ENCODE measurements at regions of chrX and their contacts with region 1.

Region 1: DNA sequence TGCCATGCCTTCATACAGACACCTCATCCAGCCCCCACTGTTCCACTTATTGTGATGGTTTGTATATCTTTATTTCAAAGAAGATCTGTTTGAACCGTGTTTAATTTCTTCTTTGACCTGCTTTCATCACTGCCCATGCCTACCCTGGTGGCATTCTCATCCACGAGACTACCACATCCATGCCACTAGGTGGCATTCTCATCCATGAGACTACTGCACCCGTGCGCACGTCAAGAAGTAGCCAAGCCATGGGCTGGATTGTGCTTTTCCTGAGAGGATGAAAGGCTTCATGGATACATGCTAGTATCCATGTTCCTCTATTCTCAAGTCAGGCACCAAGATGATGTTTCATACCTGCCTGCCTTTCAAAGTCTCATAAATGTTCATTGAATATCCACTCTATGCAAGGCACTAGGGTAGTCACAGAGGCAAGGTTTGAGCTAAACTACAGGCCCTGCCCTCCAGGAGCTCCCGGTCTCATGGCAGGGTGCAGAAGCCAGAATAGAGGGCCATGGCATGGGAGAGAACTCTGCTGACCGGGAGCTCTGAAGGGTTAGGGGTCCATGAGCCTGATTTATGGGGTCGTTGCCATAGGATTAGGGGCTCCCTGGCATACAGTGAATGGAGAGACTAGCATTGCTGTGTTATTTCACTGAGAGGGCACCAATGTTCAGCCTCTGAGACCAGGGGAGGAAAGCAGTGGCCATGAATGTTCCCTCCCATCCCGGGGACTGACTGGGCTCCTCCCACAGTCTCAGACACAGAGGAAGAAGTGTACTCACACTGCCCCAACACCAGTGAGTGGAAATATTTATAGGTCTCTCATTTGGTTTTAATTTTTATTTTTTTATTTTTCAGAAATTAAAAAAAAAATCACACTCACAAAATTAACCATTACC is 24.8 kb upstream of the EOLA2 start:
- DNase-seq: peak; percentile 43
- H3K4me3 ChIP-seq: no peak overlapping the region
- H3K27ac ChIP-seq: no peak overlapping the region
- H3K4me1 ChIP-seq: no peaks in the 10 kb centered on the region
- H3K27me3 ChIP-seq: no peaks in the 10 kb centered on the region
- CTCF ChIP-seq: peak; percentile 45

Region 2: GRCh38 chrX:150482537-150483206 is 519.6 kb after region 1 on chrX:
- intact Hi-C with region 1: loop called (anchors 5 kb)
- DNase-seq: no peak
- H3K4me3 ChIP-seq: no peak overlapping the region
- H3K27ac ChIP-seq: no peak overlapping the region
- H3K4me1 ChIP-seq: no peaks in the 10 kb centered on the region
- H3K27me3 ChIP-seq: no peaks in the 10 kb centered on the region
- CTCF ChIP-seq: no peak

Measured in colonic mucosa (tissue), 4 donors.